PC-9 (cell line): ENCODE measurements at regions of chr16 and their contacts with region 1.

Region 1: DNA sequence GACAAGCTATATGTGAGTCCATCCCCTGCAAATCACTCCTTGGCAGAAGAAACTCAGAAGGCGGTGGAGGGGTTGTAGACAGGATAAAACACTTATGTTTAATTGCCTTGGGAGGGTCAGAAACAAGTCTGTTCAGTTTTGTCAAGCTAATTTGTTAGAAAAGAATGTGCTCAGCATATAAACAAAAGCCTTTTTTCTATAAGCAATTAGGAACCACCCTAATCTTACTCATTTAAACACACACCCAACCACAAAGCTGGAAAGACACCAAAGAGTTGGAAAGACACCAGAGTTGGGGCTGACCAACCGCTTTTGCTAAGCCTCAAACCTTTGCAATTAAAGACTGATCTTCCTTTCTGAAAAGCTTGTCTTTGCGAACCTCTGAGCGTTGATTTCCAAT is 439.2 kb upstream of the ERCC4 start:
- DNase-seq: peak; percentile 24 to 61
- H3K4me3 ChIP-seq: no peak overlapping the region
- H3K27ac ChIP-seq: no peak overlapping the region
- H3K4me1 ChIP-seq: peaks cover 12% of the 10 kb centered on the region; the same call in 1 of the 2 replicates
- H3K27me3 ChIP-seq: no peaks in the 10 kb centered on the region
- CTCF ChIP-seq: no peak

Region 2: DNA sequence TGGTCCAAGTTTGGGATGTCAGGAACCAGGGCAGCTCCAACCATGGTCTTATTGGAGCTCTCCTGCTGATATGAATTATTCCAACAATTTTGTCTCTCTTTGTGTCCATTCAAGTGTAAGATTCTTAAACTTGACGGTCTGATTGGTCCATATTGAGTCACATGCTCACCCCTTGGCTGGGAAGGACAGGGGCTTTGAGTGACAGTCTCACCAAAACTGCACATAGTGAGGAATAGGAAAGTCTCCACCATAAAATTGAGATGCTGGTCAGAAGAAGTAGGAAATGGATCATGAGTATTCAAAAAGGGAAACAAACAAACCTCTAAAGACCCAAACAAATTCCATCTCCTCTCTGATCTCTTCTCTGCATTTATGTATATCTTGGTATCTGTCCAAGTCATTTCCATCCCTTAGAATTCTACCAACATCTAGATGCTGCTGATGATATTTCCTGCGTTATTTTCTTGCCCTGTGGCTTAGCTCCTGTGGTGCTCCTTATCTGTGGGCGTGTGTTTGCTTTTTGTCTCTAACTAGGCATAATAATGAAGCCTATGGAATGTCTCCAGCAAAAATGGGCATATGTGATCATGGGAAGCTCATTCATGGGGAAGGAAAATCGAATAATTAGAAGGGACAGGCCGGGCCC is 545.7 kb before region 1 on chr16:
- CTCF ChIA-PET with region 1: no interaction called
- POLR2A ChIA-PET with region 1: no interaction called
- intact Hi-C with region 1: no loop called
- DNase-seq: no peak
- H3K4me3 ChIP-seq: no peak overlapping the region
- H3K27ac ChIP-seq: no peak overlapping the region
- H3K4me1 ChIP-seq: no peaks in the 10 kb centered on the region
- H3K27me3 ChIP-seq: no peaks in the 10 kb centered on the region
- CTCF ChIP-seq: no peak

Region 3: GRCh38 chr16:13206606-13207005 is 274.2 kb before region 1 on chr16:
- CTCF ChIA-PET with region 1: interaction called, 10 read pairs
- POLR2A ChIA-PET with region 1: no interaction called
- intact Hi-C with region 1: no loop called
- DNase-seq: no peak
- H3K4me3 ChIP-seq: no peak overlapping the region
- H3K27ac ChIP-seq: no peak overlapping the region
- H3K4me1 ChIP-seq: no peaks in the 10 kb centered on the region
- H3K27me3 ChIP-seq: no peaks in the 10 kb centered on the region
- CTCF ChIP-seq: no peak